WTC11 (cell line): ENCODE measurements at regions of chr2 and their contacts with region 1.

Region 1: GRCh38 chr2:26959331-26959730 is 11.1 kb upstream of the MAPRE3 start:
- DNase-seq: no peak
- ATAC-seq: no peak
- H3K4me3 Mint-ChIP-seq: no peak overlapping the region
- H3K27ac Mint-ChIP-seq: no peak overlapping the region
- H3K4me1 Mint-ChIP-seq: no peaks in the 10 kb centered on the region
- H3K27me3 Mint-ChIP-seq: peaks cover 7% of the 10 kb centered on the region; the same call in 1 of the 2 replicates
- CTCF ChIP-seq: no peak

Region 2: GRCh38 chr2:26942543-26943295 is 16.6 kb before region 1 on chr2:
- CTCF ChIA-PET with region 1: interaction called, 51 read pairs
- POLR2A ChIA-PET with region 1: no interaction called
- DNase-seq: peak; percentile 87
- ATAC-seq: peak; percentile 78
- H3K4me3 Mint-ChIP-seq: peak overlapping the region; percentile 86
- H3K27ac Mint-ChIP-seq: no peak overlapping the region
- H3K4me1 Mint-ChIP-seq: peaks cover 16% of the 10 kb centered on the region
- H3K27me3 Mint-ChIP-seq: peaks cover 29% of the 10 kb centered on the region
- CTCF ChIP-seq: peak; percentile 96

Region 3: GRCh38 chr2:26982102-26982742 is 22.9 kb after region 1 on chr2:
- CTCF ChIA-PET with region 1: interaction called, 16 read pairs
- POLR2A ChIA-PET with region 1: no interaction called
- DNase-seq: peak; percentile 30
- ATAC-seq: peak; percentile 96
- H3K4me3 Mint-ChIP-seq: no peak overlapping the region
- H3K27ac Mint-ChIP-seq: no peak overlapping the region
- H3K4me1 Mint-ChIP-seq: no peaks in the 10 kb centered on the region
- H3K27me3 Mint-ChIP-seq: no peaks in the 10 kb centered on the region
- CTCF ChIP-seq: no peak

Region 4: DNA sequence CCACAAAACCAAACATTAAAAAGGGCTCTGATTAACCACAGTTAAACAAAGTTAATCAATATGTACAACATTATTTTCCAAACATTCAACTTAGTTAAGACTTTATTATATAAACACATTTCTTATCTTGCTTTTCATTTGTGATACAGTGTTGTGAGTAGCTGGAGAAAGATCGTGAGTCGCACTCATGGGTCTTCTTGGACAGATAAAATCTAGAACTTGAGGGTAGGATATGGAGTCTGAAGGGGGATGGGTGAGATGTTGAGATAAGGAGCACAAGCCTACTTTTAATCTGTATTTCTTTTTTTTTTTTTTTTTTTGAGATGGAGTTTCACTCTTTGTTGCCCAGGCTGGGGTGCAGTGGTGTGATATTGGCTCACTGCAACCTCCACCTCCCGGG is 50.8 kb after region 1 on chr2:
- CTCF ChIA-PET with region 1: interaction called, 596 read pairs
- POLR2A ChIA-PET with region 1: no interaction called
- DNase-seq: no peak
- ATAC-seq: no peak
- H3K4me3 Mint-ChIP-seq: no peak overlapping the region
- H3K27ac Mint-ChIP-seq: no peak overlapping the region
- H3K4me1 Mint-ChIP-seq: no peaks in the 10 kb centered on the region
- H3K27me3 Mint-ChIP-seq: peaks cover 11% of the 10 kb centered on the region; the same call in 1 of the 2 replicates
- CTCF ChIP-seq: no peak

Region 5: GRCh38 chr2:27032495-27033252 is 73.3 kb after region 1 on chr2 and contains the start of gene TMEM214:
- CTCF ChIA-PET with region 1: interaction called, 13 read pairs
- POLR2A ChIA-PET with region 1: no interaction called
- DNase-seq: peak; percentile 82
- ATAC-seq: peak; percentile 94
- H3K4me3 Mint-ChIP-seq: peak within 1 kb of the TSS; percentile 95
- H3K27ac Mint-ChIP-seq: peak within 1 kb of the TSS; percentile 65
- H3K4me1 Mint-ChIP-seq: peaks cover 16% of the 10 kb centered on the region
- H3K27me3 Mint-ChIP-seq: no peaks in the 10 kb centered on the region
- CTCF ChIP-seq: no peak
- total RNA-seq, gene TMEM214: 46.4 to 57.1 TPM (median 48.9 TPM) in 3 replicates

Region 6: GRCh38 chr2:27071277-27071989 is 112.1 kb after region 1 on chr2 and contains the start of gene OST4:
- CTCF ChIA-PET with region 1: interaction called, 11 read pairs
- POLR2A ChIA-PET with region 1: no interaction called
- DNase-seq: peak; percentile 90
- ATAC-seq: peak; percentile 89
- H3K4me3 Mint-ChIP-seq: peak within 1 kb of the TSS; percentile 98
- H3K27ac Mint-ChIP-seq: peak within 1 kb of the TSS; percentile 90
- H3K4me1 Mint-ChIP-seq: peaks cover 11% of the 10 kb centered on the region
- H3K27me3 Mint-ChIP-seq: peaks cover 3% of the 10 kb centered on the region
- CTCF ChIP-seq: no peak
- total RNA-seq, gene OST4: 210 to 239 TPM (median 226 TPM) in 3 replicates